Panc1 (cell line): ENCODE measurements at regions of chr10 and their contacts with region 1.

Region 1: DNA sequence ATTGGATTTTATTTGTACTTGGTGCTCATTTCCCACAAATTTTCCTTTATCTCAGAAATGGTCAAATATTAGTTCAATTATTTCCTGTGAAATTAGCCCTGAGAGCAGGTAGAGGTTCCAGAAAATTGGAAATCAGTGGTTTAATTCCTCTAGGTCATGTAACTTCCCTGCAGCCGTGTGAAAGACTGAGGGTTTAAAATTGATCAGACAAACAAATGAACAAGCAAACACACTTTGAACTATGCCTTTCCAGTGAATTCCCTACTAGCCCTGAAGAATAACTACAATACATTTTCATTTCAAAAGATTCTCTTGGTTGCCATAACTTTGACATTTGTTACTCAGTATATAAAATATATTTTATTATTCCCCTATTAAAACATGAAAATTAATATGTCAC is 1116.7 kb downstream of the REEP3 start:
- DNase-seq: no peak
- ATAC-seq: no peak
- H3K4me3 ChIP-seq: no peak overlapping the region
- H3K27ac ChIP-seq: no peak overlapping the region
- H3K4me1 ChIP-seq: no peaks in the 10 kb centered on the region
- H3K27me3 ChIP-seq: no peaks in the 10 kb centered on the region
- CTCF ChIP-seq: no peak

Region 2: GRCh38 chr10:64515970-64516699 is 121.8 kb before region 1 on chr10:
- CTCF ChIA-PET with region 1: no interaction called
- POLR2A ChIA-PET with region 1: no interaction called
- in situ Hi-C with region 1: no loop called
- intact Hi-C with region 1: no loop called
- DNase-seq: no peak
- ATAC-seq: no peak
- H3K4me3 ChIP-seq: no peak overlapping the region
- H3K27ac ChIP-seq: no peak overlapping the region
- H3K4me1 ChIP-seq: no peaks in the 10 kb centered on the region
- H3K27me3 ChIP-seq: no peaks in the 10 kb centered on the region
- CTCF ChIP-seq: no peak

Region 3: GRCh38 chr10:66394342-66395063 is 1756.6 kb after region 1 on chr10:
- CTCF ChIA-PET with region 1: no interaction called
- POLR2A ChIA-PET with region 1: interaction called, 10 read pairs
- in situ Hi-C with region 1: no loop called
- intact Hi-C with region 1: no loop called
- DNase-seq: no peak
- ATAC-seq: no peak
- H3K4me3 ChIP-seq: no peak overlapping the region
- H3K27ac ChIP-seq: no peak overlapping the region
- H3K4me1 ChIP-seq: no peaks in the 10 kb centered on the region
- H3K27me3 ChIP-seq: no peaks in the 10 kb centered on the region
- CTCF ChIP-seq: no peak